GM13977 (cell line): ENCODE measurements at regions of chr6 and their contacts with region 1.

Region 1: GRCh38 chr6:42879372-42880239 is at the start of gene RPL7L1:
- DNase-seq: peak; percentile 78
- CTCF ChIP-seq: no peak

Region 2: DNA sequence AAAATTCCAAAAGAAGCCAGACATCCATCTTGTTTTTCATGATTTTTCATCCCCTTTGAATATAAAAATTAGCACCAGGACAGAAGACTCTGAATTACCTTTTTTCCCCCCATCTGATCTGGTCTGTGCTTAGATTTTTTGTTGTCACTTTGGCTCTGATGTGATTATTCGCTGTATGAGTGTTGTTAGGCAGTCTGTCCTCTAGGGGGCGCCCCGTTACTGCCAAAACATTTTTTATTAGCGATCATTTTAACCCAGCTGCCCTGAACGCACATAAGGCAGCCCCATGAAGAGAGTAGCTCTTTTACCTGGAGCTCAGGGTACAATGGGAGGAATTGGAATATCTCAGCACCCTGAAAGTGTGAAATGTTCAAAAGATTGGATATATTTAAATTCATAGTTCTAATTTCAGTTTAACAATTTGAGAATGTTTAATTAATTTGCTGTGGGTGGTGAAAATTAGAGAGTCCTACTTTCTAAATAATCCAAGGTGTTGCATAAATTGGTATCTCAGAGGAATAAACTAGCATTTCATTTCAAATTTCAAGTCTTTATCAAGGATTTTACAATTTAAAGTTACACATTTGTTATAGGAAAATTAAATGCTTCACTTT is 218.0 kb before region 1 on chr6:
- in situ Hi-C with region 1: loop called (anchors 5 kb)
- DNase-seq: peak; percentile 48
- CTCF ChIP-seq: peak; percentile 85